ENCODE measurements at regions of chr5 and their contacts with region 1.

Region 1: GRCh38 chr5:138449501-138450239 is 10.8 kb downstream of the REEP2 start:
- DNase-seq: peak; percentile 95

Region 2: GRCh38 chr5:138243794-138244193 is 205.9 kb before region 1 on chr5:
- CTCF ChIA-PET with region 1: no interaction called
- POLR2A ChIA-PET with region 1: no interaction called
- DNase-seq: no peak

Region 3: DNA sequence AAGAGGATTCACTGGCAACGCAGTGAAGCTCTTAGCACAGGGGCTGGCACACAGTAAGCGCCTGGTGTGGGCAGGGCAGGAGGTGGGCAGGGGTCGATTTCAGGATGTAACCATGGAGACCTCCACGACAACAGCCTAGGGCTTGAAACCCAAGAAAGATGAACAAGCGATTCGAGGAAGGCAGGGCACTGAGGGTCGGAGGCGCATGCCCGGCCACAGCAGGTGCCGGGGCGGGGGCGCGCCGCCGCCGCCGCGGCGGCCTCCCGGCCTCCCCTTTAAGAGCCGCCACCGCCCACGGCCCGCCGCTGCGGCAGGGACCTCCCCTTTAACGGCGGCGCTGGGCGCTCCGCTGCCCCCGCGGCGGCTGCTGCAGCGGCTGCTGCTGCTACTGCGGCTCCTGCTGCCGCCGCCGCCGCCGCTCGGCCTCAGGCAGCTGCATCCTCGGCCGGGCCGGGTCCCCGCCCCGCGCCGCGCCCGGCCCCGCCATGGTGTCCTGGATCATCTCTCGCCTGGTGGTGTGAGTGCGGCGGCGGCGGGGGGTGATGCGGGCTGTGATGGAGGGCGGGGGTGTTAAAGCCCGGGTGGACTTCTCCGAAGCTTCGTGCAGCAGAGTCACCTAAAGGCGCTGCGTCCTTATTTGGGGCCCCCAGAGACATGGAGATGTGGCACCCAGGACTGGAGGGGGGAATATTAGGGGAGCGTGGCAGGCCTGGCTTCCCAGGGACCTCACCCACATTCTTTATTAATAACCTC is 10.8 kb before region 1 on chr5 and contains the start of gene REEP2:
- CTCF ChIA-PET with region 1: interaction called, 13 read pairs
- POLR2A ChIA-PET with region 1: interaction called, 14 read pairs
- DNase-seq: peak; percentile 82

Region 4: GRCh38 chr5:138464008-138464387 is 14.3 kb after region 1 on chr5:
- CTCF ChIA-PET with region 1: interaction called, 3 read pairs
- POLR2A ChIA-PET with region 1: interaction called, 14 read pairs
- DNase-seq: peak; percentile 92

Region 5: GRCh38 chr5:138542956-138543729 is 93.5 kb after region 1 on chr5 and contains the start of gene ETF1:
- CTCF ChIA-PET with region 1: interaction called, 5 read pairs
- POLR2A ChIA-PET with region 1: interaction called, 10 read pairs
- DNase-seq: peak; percentile 96

Region 6: DNA sequence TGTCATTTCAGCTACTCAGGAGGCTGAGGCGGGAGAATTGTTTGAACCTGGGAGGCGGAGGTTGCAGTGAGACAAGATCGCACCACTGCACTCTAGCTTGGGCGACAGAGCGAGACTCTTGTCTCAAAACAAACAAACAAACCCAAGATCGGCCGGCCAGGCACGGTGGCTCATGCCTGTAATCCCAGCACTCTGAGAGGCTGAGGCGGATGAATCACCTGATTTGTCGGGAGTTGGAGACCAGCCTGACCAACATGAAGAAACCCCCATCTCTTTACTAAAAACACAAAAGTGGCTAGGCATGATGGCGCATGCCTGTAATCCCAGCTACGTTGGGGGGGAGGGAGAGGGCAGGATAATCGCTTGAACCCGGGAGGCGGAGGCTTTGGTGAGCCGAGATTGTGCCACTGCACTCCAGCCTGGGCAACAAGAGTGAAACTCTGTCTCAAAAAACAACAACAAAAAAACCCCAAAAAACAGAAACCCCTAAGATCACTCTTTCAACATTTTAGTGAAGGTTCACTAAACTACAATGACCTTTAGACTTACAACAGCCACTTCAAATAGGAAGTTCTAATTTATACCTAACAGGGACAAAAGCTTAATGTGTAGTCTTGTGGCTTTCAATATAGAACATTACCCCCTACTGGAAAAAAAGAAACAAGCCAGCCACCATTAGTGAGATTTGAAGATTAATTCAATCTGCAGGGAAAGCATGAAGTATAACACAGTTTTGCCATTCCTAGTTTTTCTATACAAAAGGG is 118.6 kb after region 1 on chr5:
- CTCF ChIA-PET with region 1: no interaction called
- POLR2A ChIA-PET with region 1: no interaction called
- DNase-seq: no peak

Region 7: DNA sequence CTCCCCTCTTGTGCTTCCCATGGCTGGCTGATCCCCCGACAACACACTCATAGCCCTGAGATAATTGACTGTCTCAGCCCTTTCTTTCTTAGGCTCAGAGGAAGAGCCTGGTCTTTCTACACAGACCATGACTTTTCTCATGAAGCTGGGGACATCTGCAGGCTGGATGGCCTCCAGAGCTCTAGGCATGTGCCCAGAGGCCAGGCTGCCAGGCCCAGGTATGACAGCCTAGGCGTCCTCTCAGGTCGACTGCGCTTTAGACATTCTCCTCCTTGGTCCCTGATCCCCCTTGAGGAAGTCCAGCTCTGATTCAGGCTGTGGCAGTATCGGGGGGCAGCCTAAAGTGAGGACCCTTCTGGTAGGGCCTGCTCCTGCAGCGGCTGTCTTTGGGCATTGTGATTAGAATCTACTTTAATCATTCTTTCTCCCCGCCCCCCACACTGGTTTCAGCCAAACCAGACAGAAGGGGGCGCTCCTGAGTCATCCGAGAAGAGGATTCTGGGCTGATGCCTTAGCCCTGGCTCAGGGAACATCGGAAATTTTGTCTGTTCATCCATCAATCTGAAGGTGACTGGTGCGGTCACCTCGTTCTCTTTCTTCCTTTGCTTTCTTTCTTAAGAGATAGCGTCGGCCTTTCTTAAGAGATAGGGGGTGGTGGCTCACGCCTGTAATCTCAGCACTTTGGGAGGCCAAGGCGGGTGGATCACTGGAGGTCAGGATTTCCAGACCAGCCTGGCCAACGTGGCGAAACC is 192.1 kb after region 1 on chr5:
- CTCF ChIA-PET with region 1: no interaction called
- POLR2A ChIA-PET with region 1: no interaction called
- DNase-seq: peak; percentile 78